Esophagus muscularis mucosa (tissue), 4 donors: ENCODE measurements at regions of chr1 and their contacts with region 1.

Region 1: GRCh38 chr1:10796019-10796944 is at the start of gene CASZ1:
- DNase-seq: no peak
- H3K4me3 ChIP-seq: peak within 1 kb of the TSS; percentile 66 to 79 (median 74)
- H3K27ac ChIP-seq: peak within 1 kb of the TSS; percentile 77 to 84 (median 78)
- H3K4me1 ChIP-seq: peaks cover 22 to 58% (median 57%) of the 10 kb centered on the region in 4 donors
- H3K27me3 ChIP-seq: peaks cover 0 to 66% (median 0%) of the 10 kb centered on the region in 4 donors
- CTCF ChIP-seq: peak in 1 of 3 experiments; percentile 40
- EP300 ChIP-seq: no peak
- POLR2A ChIP-seq: peak; percentile 40
- total RNA-seq, gene CASZ1: 21.9 to 60.2 (median 29.6) TPM

Region 2: DNA sequence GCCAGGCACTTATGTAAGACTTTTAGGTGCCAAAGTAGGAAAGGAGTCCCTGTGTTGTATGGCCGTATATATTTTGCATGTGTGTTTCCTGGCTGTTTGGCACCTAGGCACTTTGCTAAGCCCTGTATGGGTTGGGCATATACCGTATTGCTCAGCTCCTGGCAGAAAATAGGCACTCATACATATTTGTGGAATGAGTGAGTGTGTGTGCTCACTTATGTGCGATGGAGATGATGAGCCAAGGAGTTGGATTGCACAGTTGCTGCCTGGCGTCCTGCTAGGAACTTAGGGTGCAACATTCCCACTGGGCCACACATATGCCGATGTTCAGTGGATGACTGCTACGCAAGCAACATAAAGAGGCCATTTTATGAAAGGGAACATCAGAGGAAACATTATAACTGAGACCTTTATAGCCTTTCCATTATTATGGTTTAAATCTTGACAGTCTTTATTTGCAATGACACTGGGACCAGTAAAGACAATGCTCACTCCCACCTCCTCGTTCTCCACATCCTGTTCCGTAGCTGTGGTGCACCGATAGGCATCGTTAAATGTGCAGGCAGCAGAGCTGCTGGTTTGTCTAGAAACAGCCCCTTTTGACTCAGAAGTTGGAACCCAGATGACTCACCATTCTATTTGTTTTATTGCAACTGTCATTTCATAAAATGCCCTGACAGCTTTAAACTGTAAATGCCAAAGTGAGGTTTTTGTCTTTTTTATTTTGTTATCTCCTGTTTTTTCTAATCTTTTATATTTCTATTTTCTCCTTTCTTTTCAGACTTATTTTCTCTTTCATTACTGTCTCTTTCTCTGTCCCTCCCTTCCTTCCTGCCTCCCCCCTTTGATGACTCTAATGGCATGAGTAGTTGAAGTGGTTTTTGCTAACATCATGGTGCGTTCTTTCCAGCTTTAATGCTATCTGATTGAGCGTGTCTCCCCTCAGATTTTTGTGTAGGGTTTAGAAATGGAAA is 285.5 kb before region 1 on chr1:
- intact Hi-C with region 1: loop called (anchors 5 kb)
- DNase-seq: no peak
- H3K4me3 ChIP-seq: no peak overlapping the region
- H3K27ac ChIP-seq: peak overlapping the region in 2 of 4 donors; percentile 16 to 23
- H3K4me1 ChIP-seq: peaks cover 25 to 74% (median 62%) of the 10 kb centered on the region in 4 donors
- H3K27me3 ChIP-seq: no peaks in the 10 kb centered on the region
- CTCF ChIP-seq: no peak
- EP300 ChIP-seq: no peak
- POLR2A ChIP-seq: no peak

Region 3: GRCh38 chr1:10679496-10680220 is 116.6 kb before region 1 on chr1:
- intact Hi-C with region 1: loop called (anchors 5 kb)
- DNase-seq: no peak
- H3K4me3 ChIP-seq: no peak overlapping the region
- H3K27ac ChIP-seq: peak overlapping the region; percentile 79 to 96 (median 90)
- H3K4me1 ChIP-seq: peaks cover 100% of the 10 kb centered on the region in 4 donors
- H3K27me3 ChIP-seq: no peaks in the 10 kb centered on the region
- CTCF ChIP-seq: no peak
- EP300 ChIP-seq: no peak
- POLR2A ChIP-seq: no peak

Region 4: GRCh38 chr1:10724948-10725847 is 71.1 kb before region 1 on chr1:
- intact Hi-C with region 1: loop called (anchors 5 kb)
- DNase-seq: no peak
- H3K4me3 ChIP-seq: peak overlapping the region in 1 of 4 donors; percentile 1
- H3K27ac ChIP-seq: peak overlapping the region; percentile 72 to 85 (median 82)
- H3K4me1 ChIP-seq: peaks cover 49 to 56% (median 53%) of the 10 kb centered on the region in 4 donors
- H3K27me3 ChIP-seq: no peaks in the 10 kb centered on the region
- CTCF ChIP-seq: no peak
- EP300 ChIP-seq: no peak
- POLR2A ChIP-seq: no peak

Region 5: DNA sequence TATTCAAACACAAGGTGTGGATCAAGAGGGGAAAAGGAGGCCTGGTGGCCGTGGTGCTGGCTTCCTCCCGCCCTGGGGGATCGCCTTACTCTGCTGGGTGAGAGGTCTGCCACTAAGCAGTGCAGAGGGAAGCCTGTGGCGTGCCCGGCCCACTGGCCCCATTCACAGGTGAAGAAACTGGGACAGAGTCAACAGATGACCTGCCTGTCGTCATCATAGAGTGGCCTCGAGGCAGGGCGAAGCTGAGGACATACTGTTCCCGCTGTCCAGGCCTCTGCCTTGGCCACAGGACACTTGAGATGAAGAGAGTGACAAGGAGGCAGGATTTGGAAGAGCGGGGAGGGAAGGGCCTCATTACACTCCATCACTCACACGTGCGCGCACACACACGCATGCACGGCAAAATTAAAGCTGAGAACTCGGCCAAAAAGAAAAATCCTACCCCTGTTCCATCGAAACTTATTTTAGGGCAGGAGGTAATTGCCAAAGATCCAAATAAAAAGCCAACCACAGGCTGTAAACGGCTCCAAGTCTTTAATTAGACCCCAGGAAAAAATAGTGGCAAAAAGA is 50.3 kb before region 1 on chr1:
- intact Hi-C with region 1: no loop called
- DNase-seq: no peak
- H3K4me3 ChIP-seq: no peak overlapping the region
- H3K27ac ChIP-seq: no peak overlapping the region
- H3K4me1 ChIP-seq: peaks cover 0 to 27% (median 0%) of the 10 kb centered on the region in 4 donors
- H3K27me3 ChIP-seq: no peaks in the 10 kb centered on the region
- CTCF ChIP-seq: no peak
- EP300 ChIP-seq: no peak
- POLR2A ChIP-seq: no peak